Thyroid gland (tissue), 4 donors: ENCODE measurements at regions of chr3 and their contacts with region 1.

Region 1: GRCh38 chr3:14915636-14916222 is 31.7 kb upstream of the NR2C2 start:
- DNase-seq: no peak
- H3K4me3 ChIP-seq: no peak overlapping the region
- H3K27ac ChIP-seq: no peak overlapping the region
- H3K4me1 ChIP-seq: no peaks in the 10 kb centered on the region
- H3K27me3 ChIP-seq: no peaks in the 10 kb centered on the region
- CTCF ChIP-seq: no peak
- POLR2A ChIP-seq: no peak

Region 2: DNA sequence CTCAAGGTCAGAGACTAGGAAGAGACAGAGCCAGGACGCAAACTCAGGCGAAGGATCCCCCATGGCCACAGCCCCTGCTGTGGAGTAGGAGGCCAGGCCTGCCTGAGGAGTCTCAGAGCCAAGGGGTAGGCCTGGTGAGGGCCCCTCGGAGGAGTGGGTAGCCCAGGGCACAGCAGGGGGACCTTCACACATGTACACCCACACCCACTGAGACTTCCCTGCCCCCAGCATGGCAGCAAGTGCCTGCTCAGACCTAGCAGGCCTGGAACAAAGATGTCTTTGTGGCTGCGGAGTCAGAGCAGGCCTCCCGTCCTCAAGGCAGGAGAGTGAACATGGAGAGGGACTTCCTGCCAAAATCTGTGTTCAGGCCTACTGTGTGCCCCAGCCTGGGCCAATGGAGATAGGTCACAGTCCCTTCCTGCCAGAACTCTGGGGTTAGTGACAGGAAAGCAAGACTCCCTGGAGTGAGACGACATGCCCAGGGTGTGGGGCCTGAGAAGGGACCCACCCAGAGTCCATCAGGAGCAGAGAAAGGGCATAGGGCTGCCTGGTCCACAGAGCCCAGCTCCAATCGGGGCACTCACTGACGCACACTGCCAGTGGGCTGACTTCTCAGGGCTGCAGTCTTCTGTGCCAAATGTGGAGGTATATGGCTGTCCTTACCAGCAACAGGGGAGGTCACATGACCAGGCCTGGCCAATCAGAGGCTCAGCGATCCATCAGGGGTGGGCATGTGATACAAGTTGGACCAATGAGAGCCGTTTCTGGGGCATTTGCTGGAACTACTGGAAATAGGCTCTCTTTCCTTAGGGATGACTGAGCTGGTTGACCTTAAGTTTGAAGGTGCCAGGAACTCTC is 377.9 kb before region 1 on chr3:
- intact Hi-C with region 1: no loop called
- DNase-seq: no peak
- H3K4me3 ChIP-seq: no peak overlapping the region
- H3K27ac ChIP-seq: no peak overlapping the region
- H3K4me1 ChIP-seq: peaks cover 0 to 7% of the 10 kb centered on the region in 2 donors
- H3K27me3 ChIP-seq: no peaks in the 10 kb centered on the region
- CTCF ChIP-seq: no peak
- POLR2A ChIP-seq: no peak

Region 3: DNA sequence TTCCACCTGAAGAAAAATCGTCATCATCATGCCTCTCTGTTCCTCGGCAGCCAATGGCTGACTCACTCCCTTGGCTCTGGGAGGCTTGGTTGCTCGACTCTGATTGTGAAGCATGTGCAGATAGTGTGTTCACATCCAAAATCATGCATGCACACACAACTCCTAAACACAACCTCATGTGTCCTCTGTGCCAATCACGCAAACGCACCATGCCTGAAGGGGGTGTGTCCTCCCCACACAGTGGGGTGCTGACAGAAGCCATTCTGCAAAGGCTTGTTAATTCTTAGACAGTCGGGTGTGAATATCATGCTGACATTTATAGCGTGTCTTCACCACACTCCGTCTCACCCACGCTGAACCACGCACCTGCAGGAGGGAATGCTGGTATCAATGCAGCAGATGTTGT is 275.6 kb before region 1 on chr3:
- intact Hi-C with region 1: loop called (anchors 10 kb)
- DNase-seq: no peak
- H3K4me3 ChIP-seq: no peak overlapping the region
- H3K27ac ChIP-seq: no peak overlapping the region
- H3K4me1 ChIP-seq: no peaks in the 10 kb centered on the region
- H3K27me3 ChIP-seq: no peaks in the 10 kb centered on the region
- CTCF ChIP-seq: no peak
- POLR2A ChIP-seq: no peak

Region 4: DNA sequence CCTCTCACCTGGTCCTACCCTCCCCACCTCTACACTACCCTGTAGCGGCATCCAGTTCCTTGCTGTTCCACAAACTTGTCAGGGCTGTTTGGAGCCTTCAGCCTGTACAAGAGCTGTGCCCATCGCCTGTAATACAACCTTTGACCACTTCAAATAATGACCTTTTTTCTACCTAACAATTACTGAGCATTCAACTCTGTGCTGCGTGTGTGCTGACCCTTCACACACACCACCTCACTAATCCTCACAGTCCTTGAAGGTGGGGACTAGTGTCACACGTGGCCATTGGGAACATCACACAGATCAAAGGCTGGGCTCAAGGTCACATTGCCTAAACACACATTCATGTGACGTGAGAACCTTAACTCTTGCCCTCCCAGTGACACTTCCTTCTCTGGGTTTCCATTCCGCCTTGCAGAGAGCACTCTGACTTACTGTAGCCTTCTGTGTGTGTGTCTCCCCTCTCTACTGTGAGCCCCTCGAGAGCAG is 237.7 kb before region 1 on chr3:
- intact Hi-C with region 1: loop called (anchors 10 kb)
- DNase-seq: no peak
- H3K4me3 ChIP-seq: no peak overlapping the region
- H3K27ac ChIP-seq: no peak overlapping the region
- H3K4me1 ChIP-seq: no peaks in the 10 kb centered on the region
- H3K27me3 ChIP-seq: no peaks in the 10 kb centered on the region
- CTCF ChIP-seq: no peak
- POLR2A ChIP-seq: no peak